ENCODE measurements at regions of chr7 and their contacts with region 1.

Region 1: DNA sequence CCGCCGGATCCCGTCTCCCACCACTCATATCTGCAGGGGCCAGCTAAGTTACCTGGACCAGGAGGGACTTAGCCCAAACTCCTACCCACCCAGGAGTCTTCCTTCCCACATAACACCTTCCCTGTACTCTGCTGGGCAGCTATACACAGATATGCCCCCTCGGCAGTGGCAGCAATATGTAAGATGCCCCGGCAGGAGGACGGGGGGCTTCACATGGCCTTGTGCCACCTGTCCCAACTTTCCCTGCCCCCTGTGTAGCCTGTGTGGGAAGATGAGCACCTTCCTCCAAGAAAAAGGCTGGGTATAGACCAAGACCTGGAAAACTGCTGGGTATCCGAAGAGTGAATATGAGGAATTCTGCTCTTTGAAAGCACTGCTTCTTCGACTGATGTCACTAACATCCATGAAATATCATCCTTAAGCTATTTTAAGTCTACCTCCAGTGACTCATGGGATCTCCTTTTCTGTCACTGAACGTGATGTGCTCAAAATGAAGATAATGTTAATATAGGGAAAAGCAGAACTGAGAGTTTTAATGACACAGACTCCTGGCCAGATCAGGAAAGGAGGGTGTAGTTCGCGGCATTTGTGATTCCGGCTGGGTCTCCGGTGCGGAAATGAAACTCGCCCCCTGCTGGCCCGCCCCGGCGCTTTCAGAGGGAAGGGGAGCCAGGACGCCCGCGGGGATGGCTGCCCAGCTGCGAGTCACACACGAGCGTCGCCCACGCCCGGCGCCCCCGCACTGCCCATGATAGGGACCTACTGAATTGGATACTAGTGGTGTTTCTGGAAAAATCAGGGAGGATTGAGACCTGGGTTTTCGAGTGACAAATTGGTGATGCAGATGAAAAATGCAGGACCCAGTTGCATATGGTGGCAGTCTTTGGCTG is 256.9 kb upstream of the NFE2L3 start:
- DNase-seq: peak; percentile 37 to 66 (median 52)
- ATAC-seq: peak; percentile 84
- H3K4me3 ChIP-seq: peak overlapping the region; percentile 46
- H3K4me3 Mint-ChIP-seq: peak overlapping the region; percentile 48 to 93 (median 77)
- H3K27ac ChIP-seq: no peak overlapping the region
- H3K27ac Mint-ChIP-seq: peak overlapping the region in 4 of 9 donors; percentile 9 to 71 (median 38)
- H3K4me1 ChIP-seq: peaks cover 9 to 13% of the 10 kb centered on the region in 2 donors
- H3K4me1 Mint-ChIP-seq: peaks cover 13 to 29% (median 27%) of the 10 kb centered on the region in 7 donors
- H3K27me3 ChIP-seq: no peaks in the 10 kb centered on the region
- H3K27me3 Mint-ChIP-seq: peaks cover 7 to 37% (median 15%) of the 10 kb centered on the region in 5 donors

Region 2: GRCh38 chr7:25223206-25223605 is 671.9 kb before region 1 on chr7:
- CTCF ChIA-PET with region 1: no interaction called
- POLR2A ChIA-PET with region 1: no interaction called
- intact Hi-C with region 1: no loop called
- DNase-seq: no peak
- ATAC-seq: no peak
- H3K4me3 ChIP-seq: no peak overlapping the region
- H3K4me3 Mint-ChIP-seq: no peak overlapping the region
- H3K27ac ChIP-seq: no peak overlapping the region
- H3K27ac Mint-ChIP-seq: no peak overlapping the region
- H3K4me1 ChIP-seq: no peaks in the 10 kb centered on the region
- H3K4me1 Mint-ChIP-seq: no peaks in the 10 kb centered on the region
- H3K27me3 ChIP-seq: no peaks in the 10 kb centered on the region
- H3K27me3 Mint-ChIP-seq: peaks cover 37 to 50% (median 41%) of the 10 kb centered on the region in 5 donors

Region 3: DNA sequence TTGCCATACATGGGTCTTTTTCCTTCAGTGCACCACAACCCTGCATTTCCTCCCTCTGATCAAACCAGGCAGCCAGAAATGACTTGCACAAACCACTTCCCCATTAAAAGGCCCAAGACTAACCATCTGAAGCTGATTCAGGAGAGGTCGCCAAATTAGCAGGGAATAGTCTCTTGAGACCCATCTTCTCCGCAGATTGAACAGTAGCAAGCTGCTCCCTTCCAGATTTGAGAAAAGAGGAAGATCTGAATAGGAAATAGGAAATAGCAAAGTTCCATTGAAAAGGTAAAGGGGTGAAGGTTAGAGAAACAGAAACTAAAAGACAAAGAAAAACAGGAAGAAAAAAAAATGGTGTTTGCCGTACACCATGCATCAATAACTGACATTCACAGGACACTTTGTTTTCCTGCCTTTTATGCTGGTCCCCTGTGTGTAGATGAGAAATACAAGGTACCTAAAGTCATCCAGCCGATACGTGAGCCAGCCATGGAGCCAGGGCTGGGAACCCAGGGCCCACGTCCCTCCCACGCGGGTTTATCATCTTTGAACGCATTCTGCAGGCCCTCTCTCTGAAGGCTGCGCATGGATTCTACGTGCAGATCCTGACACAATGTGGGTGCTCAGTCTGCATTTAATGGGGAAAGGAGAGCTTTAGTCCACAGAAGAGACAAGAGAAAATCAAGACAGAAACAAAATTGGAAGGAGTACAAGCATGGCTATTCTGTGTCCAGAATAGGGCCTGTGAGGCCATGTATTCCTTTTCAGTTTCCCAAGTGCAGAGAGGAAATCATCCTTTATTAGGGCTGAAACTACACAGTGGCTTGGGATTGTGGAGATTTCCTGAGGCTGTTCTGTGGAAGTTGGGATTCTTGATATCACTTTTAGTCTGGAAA is 398.4 kb before region 1 on chr7:
- CTCF ChIA-PET with region 1: no interaction called
- POLR2A ChIA-PET with region 1: no interaction called
- intact Hi-C with region 1: no loop called
- DNase-seq: peak in 6 of 9 donors; percentile 9 to 40 (median 35)
- ATAC-seq: peak; percentile 80
- H3K4me3 ChIP-seq: peak overlapping the region; percentile 24
- H3K4me3 Mint-ChIP-seq: peak overlapping the region; percentile 53 to 92 (median 84)
- H3K27ac ChIP-seq: peak overlapping the region; percentile 60
- H3K27ac Mint-ChIP-seq: peak overlapping the region; percentile 83 to 97 (median 92)
- H3K4me1 ChIP-seq: peaks cover 0 to 15% of the 10 kb centered on the region in 2 donors
- H3K4me1 Mint-ChIP-seq: peaks cover 7 to 23% (median 18%) of the 10 kb centered on the region in 7 donors
- H3K27me3 ChIP-seq: no peaks in the 10 kb centered on the region
- H3K27me3 Mint-ChIP-seq: peaks cover 0 to 3% (median 0%) of the 10 kb centered on the region in 5 donors

Region 4: DNA sequence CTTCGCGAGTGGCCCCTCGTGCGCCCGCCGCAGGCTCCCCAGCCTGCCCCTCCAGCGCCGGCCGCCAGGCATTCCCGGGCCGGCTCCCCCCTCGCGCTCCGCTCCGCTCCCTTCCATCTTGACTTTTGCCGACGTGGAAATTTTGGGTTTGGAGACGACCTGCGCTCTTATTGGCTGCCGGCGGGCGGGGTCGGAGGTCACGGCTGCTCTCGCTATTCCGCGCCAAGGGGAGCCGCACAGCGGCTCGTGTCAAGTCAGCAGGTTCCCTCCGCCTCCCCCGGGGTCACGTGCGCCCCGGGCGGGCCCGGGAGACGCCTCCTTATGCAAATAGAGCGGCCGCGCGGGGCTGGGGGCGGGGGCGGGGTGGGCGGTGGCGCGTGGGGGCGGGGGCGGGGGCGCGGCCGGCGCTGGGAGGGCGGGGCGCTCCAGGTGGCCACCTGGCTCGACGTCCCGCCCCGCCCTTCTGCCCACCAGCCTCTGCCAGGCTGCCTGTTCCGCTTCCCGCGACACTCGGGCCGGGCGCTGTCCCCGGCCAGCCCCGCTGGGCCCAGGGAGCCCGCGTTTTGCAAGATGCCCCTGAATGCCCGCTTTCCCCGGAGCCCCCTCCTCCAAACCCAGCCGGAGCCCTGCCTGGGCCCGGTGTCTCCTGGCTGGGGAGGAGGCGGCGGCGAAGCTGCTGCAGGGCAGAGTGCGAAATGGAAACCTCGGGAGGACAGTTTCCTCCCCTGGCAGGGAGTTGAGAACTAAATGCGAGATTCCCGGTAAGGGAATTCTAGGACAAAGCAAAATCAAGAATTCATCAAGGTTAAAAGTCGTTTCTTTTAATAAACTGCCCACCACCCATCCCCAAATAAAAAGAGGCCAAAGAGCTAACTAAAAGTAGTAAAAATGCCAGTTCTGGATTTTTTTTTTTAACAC is 56.1 kb after region 1 on chr7:
- CTCF ChIA-PET with region 1: interaction called, 4 read pairs
- POLR2A ChIA-PET with region 1: interaction called, 3 read pairs
- intact Hi-C with region 1: loop called (anchors 2 to 5 kb)
- DNase-seq: peak; percentile 70 to 94 (median 87)
- ATAC-seq: peak; percentile 99
- H3K4me3 ChIP-seq: peak overlapping the region; percentile 61
- H3K4me3 Mint-ChIP-seq: peak overlapping the region; percentile 87 to 94 (median 92)
- H3K27ac ChIP-seq: peak overlapping the region; percentile 52
- H3K27ac Mint-ChIP-seq: peak overlapping the region in 7 of 9 donors; percentile 45 to 87 (median 81)
- H3K4me1 ChIP-seq: peaks cover 7 to 14% of the 10 kb centered on the region in 2 donors
- H3K4me1 Mint-ChIP-seq: peaks cover 16 to 31% (median 20%) of the 10 kb centered on the region in 7 donors
- H3K27me3 ChIP-seq: no peaks in the 10 kb centered on the region
- H3K27me3 Mint-ChIP-seq: peaks cover 0 to 22% (median 5%) of the 10 kb centered on the region in 5 donors

Region 5: GRCh38 chr7:26078437-26079336 is 183.5 kb after region 1 on chr7:
- CTCF ChIA-PET with region 1: interaction called, 15 read pairs
- POLR2A ChIA-PET with region 1: no interaction called
- intact Hi-C with region 1: loop called (anchors 1 to 5 kb)
- DNase-seq: peak; percentile 68 to 86 (median 80)
- ATAC-seq: peak; percentile 99
- H3K4me3 ChIP-seq: no peak overlapping the region
- H3K4me3 Mint-ChIP-seq: peak overlapping the region in 7 of 10 donors; percentile 30 to 68 (median 51)
- H3K27ac ChIP-seq: no peak overlapping the region
- H3K27ac Mint-ChIP-seq: no peak overlapping the region
- H3K4me1 ChIP-seq: peaks cover 0 to 10% of the 10 kb centered on the region in 2 donors
- H3K4me1 Mint-ChIP-seq: peaks cover 0 to 10% (median 6%) of the 10 kb centered on the region in 7 donors
- H3K27me3 ChIP-seq: peaks cover 0 to 6% of the 10 kb centered on the region in 2 donors
- H3K27me3 Mint-ChIP-seq: peaks cover 15 to 84% (median 33%) of the 10 kb centered on the region in 5 donors

Region 6: GRCh38 chr7:26151953-26152781 is 257.0 kb after region 1 on chr7 and contains the start of gene NFE2L3:
- CTCF ChIA-PET with region 1: no interaction called
- POLR2A ChIA-PET with region 1: no interaction called
- intact Hi-C with region 1: loop called in 1 of 2 experiments (anchors 5 kb)
- DNase-seq: peak; percentile 71 to 90 (median 79)
- ATAC-seq: peak; percentile 90
- H3K4me3 ChIP-seq: peak within 1 kb of the TSS; percentile 77
- H3K4me3 Mint-ChIP-seq: peak within 1 kb of the TSS; percentile 85 to 100 (median 92)
- H3K27ac ChIP-seq: peak within 1 kb of the TSS; percentile 73
- H3K27ac Mint-ChIP-seq: peak within 1 kb of the TSS; percentile 74 to 97 (median 93)
- H3K4me1 ChIP-seq: peaks cover 26 to 33% of the 10 kb centered on the region in 2 donors
- H3K4me1 Mint-ChIP-seq: peaks cover 23 to 56% (median 51%) of the 10 kb centered on the region in 7 donors
- H3K27me3 ChIP-seq: no peaks in the 10 kb centered on the region
- H3K27me3 Mint-ChIP-seq: no peaks in the 10 kb centered on the region
- total RNA-seq, gene NFE2L3: 1.1 to 49.5 (median 4.5) TPM

Region 7: GRCh38 chr7:26500749-26501352 is 605.7 kb after region 1 on chr7:
- CTCF ChIA-PET with region 1: interaction called, 3 read pairs
- POLR2A ChIA-PET with region 1: no interaction called
- intact Hi-C with region 1: loop called in 1 of 2 experiments (anchors 2 kb)
- DNase-seq: peak in 3 of 9 donors; percentile 7 to 18 (median 9)
- ATAC-seq: peak; percentile 46
- H3K4me3 ChIP-seq: no peak overlapping the region
- H3K4me3 Mint-ChIP-seq: no peak overlapping the region
- H3K27ac ChIP-seq: no peak overlapping the region
- H3K27ac Mint-ChIP-seq: no peak overlapping the region
- H3K4me1 ChIP-seq: no peaks in the 10 kb centered on the region
- H3K4me1 Mint-ChIP-seq: peaks cover 0 to 2% (median 0%) of the 10 kb centered on the region in 7 donors
- H3K27me3 ChIP-seq: no peaks in the 10 kb centered on the region
- H3K27me3 Mint-ChIP-seq: peaks cover 0 to 30% (median 9%) of the 10 kb centered on the region in 5 donors

Region 8: DNA sequence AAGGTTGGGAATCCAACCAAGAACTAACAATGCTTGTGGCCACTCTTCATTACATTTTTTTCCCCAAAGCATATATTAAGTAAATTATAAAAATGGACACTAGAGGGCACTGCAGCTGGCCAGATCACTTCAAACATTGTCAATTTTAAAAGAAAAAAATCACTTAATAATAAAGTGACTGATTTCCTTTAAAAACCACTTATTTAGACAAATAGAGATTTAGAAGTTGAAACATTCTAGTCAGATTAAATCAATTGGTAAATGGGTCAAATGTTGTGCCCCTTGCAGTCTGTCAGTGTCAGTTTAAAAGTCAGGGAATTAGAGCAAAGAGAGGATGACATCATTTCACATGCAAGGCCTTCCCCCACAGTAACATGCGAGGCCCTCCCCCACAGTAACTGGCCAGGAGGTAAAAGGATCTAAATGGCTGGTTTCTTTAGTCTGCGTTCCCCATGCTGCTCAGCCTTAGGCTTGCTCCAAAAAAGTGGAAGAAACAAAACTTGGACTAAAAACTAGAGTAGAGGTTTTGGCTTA is 791.4 kb after region 1 on chr7:
- CTCF ChIA-PET with region 1: no interaction called
- POLR2A ChIA-PET with region 1: no interaction called
- intact Hi-C with region 1: loop called in 1 of 2 experiments (anchors 5 kb)
- DNase-seq: peak in 7 of 9 donors; percentile 7 to 49 (median 30)
- ATAC-seq: peak; percentile 54
- H3K4me3 ChIP-seq: no peak overlapping the region
- H3K4me3 Mint-ChIP-seq: no peak overlapping the region
- H3K27ac ChIP-seq: no peak overlapping the region
- H3K27ac Mint-ChIP-seq: no peak overlapping the region
- H3K4me1 ChIP-seq: no peaks in the 10 kb centered on the region
- H3K4me1 Mint-ChIP-seq: peaks cover 0 to 1% (median 0%) of the 10 kb centered on the region in 7 donors
- H3K27me3 ChIP-seq: peaks cover 0 to 11% of the 10 kb centered on the region in 2 donors
- H3K27me3 Mint-ChIP-seq: peaks cover 38 to 67% (median 45%) of the 10 kb centered on the region in 5 donors